Prostate gland (tissue), 2 donors: ENCODE measurements at regions of chr1 and their contacts with region 1.

Region 1: GRCh38 chr1:9196129-9197040 is 38.2 kb upstream of the H6PD start:
- DNase-seq: peak; percentile 59
- H3K4me3 ChIP-seq: no peak overlapping the region
- H3K27ac ChIP-seq: no peak overlapping the region
- H3K4me1 ChIP-seq: peaks cover 5% of the 10 kb centered on the region
- H3K27me3 ChIP-seq: peaks cover 5% of the 10 kb centered on the region
- CTCF ChIP-seq: peak; percentile 38 to 89 (median 79)
- POLR2A ChIP-seq: no peak

Region 2: DNA sequence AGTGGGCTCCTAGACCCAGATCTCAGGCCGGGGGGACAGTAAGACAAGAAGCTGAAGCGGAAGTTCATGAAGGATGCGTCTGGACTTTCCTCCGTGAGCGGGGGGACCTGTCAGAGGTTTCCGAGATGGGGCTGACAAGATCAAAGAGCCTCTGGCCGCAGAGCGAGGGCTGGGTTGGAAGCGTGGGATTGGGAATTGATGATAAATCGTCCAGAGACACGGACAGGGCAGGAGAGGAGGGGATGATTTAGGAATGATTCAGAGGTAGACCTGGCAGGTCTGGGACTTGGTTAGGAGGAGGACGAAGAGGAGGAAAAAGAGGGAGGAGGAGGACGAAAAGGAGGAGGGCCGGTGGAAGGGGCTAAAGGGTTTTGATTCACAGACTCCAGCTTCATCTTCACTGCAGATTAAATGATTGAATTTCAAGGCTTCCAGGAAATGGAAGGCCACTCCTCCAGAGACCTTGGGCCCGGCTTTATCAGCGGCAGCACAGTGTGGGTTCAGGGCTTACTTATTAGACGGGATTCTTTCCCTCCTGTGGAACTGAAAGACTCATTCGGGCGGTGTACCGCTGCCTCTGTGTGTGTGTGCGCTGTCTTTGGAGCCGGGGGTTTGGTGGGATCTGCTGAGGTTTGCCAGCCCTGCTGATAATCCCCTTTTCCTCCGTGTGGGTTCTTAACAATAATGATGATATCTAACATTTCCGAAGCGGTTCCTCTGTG is 964.2 kb before region 1 on chr1:
- intact Hi-C with region 1: no loop called
- DNase-seq: no peak
- H3K4me3 ChIP-seq: no peak overlapping the region
- H3K27ac ChIP-seq: no peak overlapping the region
- H3K4me1 ChIP-seq: no peaks in the 10 kb centered on the region
- H3K27me3 ChIP-seq: no peaks in the 10 kb centered on the region
- CTCF ChIP-seq: no peak
- POLR2A ChIP-seq: no peak

Region 3: GRCh38 chr1:9145021-9145668 is 51.2 kb before region 1 on chr1:
- intact Hi-C with region 1: loop called (anchors 1 kb)
- DNase-seq: no peak
- H3K4me3 ChIP-seq: no peak overlapping the region
- H3K27ac ChIP-seq: no peak overlapping the region
- H3K4me1 ChIP-seq: no peaks in the 10 kb centered on the region
- H3K27me3 ChIP-seq: no peaks in the 10 kb centered on the region
- CTCF ChIP-seq: no peak
- POLR2A ChIP-seq: no peak

Region 4: DNA sequence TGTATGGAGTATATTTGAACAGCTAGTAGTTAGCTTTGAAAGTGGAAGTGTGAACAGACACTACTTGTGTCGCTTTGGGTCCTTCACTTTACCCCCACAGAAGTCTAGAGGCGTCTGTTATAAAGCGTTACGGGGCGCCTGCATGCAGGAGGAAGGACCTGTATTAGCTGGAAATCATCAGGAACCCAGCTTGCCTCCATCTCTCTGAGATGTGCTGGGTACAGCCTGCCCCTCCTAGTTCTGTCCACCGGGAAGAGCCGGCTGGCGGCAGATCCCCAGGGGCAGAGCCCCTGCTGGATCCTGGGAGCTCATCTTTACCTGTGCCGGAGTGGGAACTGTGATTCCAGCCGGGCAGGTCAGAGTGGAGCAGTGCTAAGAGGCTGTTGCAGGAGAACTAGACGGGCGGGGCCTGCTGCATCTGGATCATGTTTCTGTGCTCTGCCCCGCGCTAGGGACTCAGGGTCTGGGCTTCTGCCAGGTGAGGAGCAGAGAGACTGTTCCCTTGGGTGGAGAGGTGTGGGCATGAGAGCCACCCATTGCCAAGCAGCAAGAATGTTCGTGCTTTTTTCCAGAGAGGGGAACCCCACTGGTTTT is 74.0 kb after region 1 on chr1:
- intact Hi-C with region 1: no loop called
- DNase-seq: peak; percentile 57
- H3K4me3 ChIP-seq: no peak overlapping the region
- H3K27ac ChIP-seq: no peak overlapping the region
- H3K4me1 ChIP-seq: no peaks in the 10 kb centered on the region
- H3K27me3 ChIP-seq: no peaks in the 10 kb centered on the region
- CTCF ChIP-seq: no peak
- POLR2A ChIP-seq: no peak